BJ (cell line): ENCODE measurements at regions of chr1 and their contacts with region 1.

Region 1: GRCh38 chr1:30779294-30780071 is 21.9 kb upstream of the LAPTM5 start:
- DNase-seq: peak; percentile 15
- H3K4me3 ChIP-seq: no peak overlapping the region
- H3K27me3 ChIP-seq: no peaks in the 10 kb centered on the region
- CTCF ChIP-seq: peak; percentile 92

Region 2: DNA sequence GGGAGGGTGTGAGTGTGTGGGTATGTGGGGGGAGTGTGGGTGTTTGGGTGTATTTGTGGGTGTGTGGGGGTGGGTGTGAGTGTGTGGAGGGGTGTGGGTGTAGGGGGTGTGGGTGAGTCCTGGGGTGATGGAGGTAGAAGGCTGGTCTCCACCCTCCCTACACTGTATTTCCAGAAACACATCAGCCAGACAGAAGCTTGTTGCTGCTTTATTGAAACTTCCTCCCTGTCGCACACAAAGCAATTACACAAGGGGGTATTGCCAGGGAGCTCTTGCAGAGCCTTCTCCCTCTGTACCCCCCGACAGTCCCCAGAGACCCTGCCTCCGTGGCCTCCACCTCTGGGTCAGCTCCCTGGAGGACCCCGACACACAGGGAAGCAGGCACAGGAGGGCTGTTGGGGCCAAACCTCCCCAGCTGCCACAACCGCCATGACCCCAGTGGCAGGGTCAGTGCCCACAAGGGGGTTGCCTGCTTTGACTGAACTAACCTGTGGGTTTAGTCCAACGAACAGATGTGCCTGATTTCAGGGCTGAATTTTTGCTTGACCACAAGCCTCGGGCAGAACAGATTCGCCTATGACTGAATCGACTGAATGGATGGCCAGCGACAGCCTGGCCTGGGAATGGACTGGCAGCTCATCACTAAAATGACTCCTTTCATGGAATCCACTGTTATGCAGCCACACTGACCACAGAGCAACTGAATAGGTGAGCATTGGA is 47.0 kb before region 1 on chr1:
- CTCF ChIA-PET with region 1: interaction called, 73 read pairs
- POLR2A ChIA-PET with region 1: no interaction called
- DNase-seq: no peak
- H3K4me3 ChIP-seq: no peak overlapping the region
- H3K27me3 ChIP-seq: peaks cover 4% of the 10 kb centered on the region
- CTCF ChIP-seq: no peak

Region 3: DNA sequence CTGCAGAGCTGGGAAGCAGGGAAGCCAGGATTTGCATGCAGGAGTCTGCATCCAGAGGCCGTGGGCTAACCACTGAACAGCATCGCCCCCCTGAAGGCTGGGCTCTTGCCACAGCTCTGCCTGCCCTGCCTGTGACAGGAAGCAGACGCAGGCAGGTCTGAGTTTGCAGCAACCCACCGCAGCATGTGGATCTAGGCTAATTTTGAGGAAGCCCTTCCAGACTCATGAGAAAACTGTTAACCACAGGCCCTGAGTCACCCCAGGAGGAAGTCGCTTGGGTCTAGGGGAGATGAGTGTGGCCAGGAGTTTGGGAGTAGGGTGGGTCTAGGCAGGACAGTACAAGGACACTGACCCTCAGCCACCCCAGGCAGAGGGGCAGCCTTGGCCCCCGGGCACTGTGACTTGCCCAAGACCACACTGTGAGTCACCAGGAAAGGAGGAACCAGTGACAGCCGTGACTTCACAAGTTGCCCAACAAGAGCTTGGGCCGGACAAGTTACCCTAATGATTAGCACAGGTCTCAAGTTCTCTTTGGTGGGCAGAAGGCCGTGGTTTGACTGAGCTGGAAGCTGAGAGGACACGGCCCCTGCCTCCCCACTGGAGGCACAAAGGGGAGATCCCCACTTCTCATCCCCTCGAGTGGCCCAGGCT is 22.8 kb before region 1 on chr1:
- CTCF ChIA-PET with region 1: interaction called, 114 read pairs
- POLR2A ChIA-PET with region 1: no interaction called
- DNase-seq: peak; percentile 73
- H3K4me3 ChIP-seq: no peak overlapping the region
- H3K27me3 ChIP-seq: no peaks in the 10 kb centered on the region
- CTCF ChIP-seq: no peak

Region 4: GRCh38 chr1:30790850-30791778 is 11.6 kb after region 1 on chr1:
- CTCF ChIA-PET with region 1: interaction called, 17 read pairs
- POLR2A ChIA-PET with region 1: no interaction called
- DNase-seq: no peak
- H3K4me3 ChIP-seq: no peak overlapping the region
- H3K27me3 ChIP-seq: peaks cover 7% of the 10 kb centered on the region
- CTCF ChIP-seq: no peak

Region 5: DNA sequence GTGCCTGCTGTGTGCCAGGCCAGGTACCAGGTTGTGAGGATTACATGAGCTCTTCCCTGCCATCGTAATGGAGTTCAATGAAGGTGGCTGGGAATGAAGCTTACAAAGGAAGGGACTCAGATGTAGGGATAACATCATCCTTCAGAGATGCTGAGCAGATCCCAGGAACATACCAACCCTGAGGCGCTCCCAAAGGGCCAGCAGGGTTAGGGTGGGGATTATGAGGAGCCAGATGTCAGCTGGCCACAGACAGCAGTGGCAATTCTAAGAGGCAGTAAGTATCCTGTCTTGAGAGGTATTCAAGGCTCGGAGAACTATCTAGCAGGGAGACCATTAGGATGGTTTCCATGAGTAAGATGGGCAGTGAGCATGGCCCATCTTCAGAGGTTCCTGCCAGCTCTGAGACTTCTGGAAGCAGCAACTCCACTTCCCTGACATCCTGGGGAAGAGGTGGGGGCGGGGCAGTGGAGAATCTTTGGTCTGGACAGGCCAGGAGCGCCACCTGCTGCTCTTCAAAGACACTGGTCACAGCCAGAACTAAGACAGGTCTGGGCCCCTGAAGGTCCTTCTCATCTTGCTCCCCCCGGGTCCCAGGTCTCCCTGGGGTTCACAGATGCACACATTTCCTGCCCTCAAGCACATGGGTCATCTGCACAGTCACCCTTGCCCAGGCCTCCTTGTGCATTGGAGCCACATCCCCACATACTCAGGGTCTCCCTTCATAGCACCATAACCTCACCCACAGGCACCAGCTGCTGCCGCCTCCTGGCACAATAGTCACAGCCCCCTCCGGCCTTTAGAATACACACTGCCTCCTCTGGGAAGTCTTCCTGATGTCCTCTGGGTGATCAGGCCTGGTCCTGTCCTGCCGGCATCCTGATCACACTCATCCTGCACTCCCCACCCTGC is 131.8 kb after region 1 on chr1:
- CTCF ChIA-PET with region 1: interaction called, 261 read pairs
- POLR2A ChIA-PET with region 1: no interaction called
- DNase-seq: no peak
- H3K4me3 ChIP-seq: no peak overlapping the region
- H3K27me3 ChIP-seq: no peaks in the 10 kb centered on the region
- CTCF ChIP-seq: peak; percentile 88

Region 6: DNA sequence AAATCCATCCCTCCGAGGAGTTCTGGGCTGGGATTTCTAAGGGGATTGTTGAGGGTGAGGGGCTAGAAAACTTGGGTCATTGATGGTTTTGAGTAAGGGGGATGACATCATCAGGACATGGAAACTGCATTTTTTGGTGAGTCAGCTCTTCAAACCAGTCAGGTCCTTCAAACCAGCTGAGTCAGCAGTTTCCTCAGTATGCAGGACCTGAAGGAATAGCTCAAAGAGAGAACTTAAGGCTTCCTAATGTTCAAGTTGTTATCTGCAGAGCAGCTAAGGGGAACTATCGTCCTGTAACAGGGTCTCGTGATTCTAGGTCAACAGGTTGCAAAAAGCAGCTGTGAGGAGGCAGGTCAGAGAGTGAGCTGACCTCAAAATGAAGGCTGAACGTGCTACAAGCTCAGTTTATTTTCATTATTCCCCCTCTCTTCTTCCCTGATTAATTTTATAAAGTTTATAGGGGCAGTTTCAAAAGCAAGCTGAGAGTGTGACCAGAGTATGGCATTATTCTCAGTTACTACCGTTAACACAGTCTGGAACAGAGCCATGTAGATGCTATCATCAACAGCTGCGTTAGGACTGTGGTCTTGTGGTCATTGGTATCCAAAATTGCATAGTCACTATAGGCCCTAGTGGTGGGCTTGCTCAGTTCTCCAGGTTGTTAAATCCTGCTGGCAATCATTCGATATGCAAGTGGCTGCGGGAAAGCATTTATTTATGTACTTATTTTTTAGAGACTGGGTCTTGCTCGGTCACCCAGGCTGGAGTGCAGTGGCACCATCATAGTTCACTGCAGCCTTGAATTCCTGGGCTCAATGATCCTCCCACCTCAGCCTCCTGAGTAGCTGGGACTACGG is 139.8 kb after region 1 on chr1:
- CTCF ChIA-PET with region 1: interaction called, 261 read pairs
- POLR2A ChIA-PET with region 1: no interaction called
- DNase-seq: no peak
- H3K4me3 ChIP-seq: no peak overlapping the region
- H3K27me3 ChIP-seq: no peaks in the 10 kb centered on the region
- CTCF ChIP-seq: no peak

Region 7: DNA sequence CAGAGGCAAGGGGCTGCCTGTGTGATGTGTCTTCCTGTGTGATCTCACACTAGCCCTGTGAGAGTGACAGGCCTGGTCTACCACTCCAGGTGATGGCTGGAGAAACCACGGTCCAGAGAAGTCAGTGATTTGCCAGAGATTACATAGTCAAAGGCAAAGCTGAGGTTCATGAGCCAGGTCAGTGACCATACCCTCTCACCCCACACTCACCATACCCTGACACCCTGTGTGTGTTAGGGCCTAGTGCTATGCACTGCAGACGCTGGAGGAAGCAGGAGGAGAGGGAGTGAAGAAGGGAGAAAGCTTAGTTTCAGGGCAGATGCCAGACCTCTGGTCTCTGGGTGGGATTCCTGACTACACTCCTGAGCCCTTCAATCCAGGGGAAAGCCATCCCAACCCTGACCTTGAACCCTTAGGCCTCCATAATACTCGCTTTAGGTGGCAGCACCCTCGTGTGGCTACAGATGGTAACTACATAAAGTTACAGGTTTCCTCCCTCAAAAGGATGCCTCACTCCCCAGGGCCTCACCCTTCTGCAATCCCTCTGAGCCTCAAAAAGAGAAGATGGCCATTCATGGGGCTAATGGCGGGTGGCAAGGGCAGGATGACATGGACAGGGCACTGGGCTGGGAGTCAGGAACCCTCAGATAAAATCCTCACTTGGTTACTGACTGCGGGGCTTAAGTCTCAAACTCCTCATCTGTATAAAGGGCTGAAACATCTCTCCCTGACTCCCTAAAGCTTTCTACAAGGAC is 149.8 kb after region 1 on chr1:
- CTCF ChIA-PET with region 1: interaction called, 18 read pairs
- POLR2A ChIA-PET with region 1: no interaction called
- DNase-seq: no peak
- H3K4me3 ChIP-seq: no peak overlapping the region
- H3K27me3 ChIP-seq: no peaks in the 10 kb centered on the region
- CTCF ChIP-seq: peak; percentile 74